PC-3 (cell line): ENCODE measurements at regions of chr11 and their contacts with region 1.

Region 1: DNA sequence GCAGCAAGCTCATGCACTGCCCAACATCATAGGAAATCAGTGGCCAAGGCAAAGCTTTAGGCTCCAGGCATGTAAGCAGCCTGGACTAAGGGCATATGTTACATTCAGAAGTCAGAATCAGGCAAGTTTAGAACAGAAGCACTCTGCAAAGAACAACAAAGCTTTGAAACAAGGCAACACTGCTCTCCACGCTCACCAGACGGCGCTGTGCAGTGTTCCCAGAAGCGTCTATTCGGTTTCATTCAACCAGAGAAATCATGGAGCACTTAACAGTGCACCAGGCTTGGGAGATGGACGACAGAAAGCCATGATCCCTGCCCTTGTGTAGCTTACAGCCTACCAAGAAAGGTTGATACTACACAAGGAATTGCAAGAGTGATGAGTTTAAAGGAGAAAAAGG is 555.8 kb downstream of the BUD13 start:
- DNase-seq: peak; percentile 57
- ATAC-seq: peak; percentile 35; the same call in 1 of the 2 replicates
- H3K4me3 ChIP-seq: no peak overlapping the region
- H3K27ac ChIP-seq: no peak overlapping the region
- H3K4me1 ChIP-seq: no peaks in the 10 kb centered on the region
- H3K27me3 ChIP-seq: no peaks in the 10 kb centered on the region
- CTCF ChIP-seq: peak; percentile 75

Region 2: DNA sequence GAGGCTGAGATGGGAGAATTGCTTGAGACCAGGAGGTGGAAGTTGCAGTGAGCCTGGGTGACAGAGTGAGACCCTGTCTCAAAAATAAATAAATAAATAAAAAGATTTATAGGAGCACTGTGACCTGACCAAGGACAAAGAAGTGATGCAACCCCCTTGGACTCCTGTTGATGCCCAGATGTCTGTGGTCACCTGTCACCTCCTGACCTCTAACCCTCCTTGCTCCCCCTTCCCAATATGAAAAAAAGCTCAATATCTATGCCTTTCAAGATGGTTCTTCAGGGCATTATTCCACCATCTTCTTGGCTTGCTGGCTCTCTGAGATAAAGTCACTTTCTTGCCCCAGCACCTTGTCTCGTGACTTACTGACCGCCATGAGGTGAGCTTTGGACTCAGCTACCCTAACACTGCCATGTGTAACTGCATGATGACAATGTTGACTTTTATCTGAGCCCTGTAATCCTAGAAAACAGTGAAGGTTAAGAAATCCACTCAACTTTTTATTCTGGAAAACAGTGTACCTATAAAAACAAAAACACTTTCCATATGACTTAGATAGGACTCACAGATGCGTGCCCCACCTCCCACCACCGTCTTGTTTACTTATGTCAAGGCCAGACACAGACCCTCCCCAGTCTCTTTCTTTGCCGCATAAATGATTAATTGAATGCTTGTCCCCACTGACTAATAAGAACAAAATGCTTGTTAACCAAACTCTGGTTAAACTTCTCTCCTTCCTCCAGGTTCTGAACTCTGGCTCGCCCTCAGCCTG is 195.3 kb after region 1 on chr11:
- CTCF ChIA-PET with region 1: no interaction called
- POLR2A ChIA-PET with region 1: no interaction called
- intact Hi-C with region 1: no loop called
- DNase-seq: peak; percentile 43
- ATAC-seq: no peak
- H3K4me3 ChIP-seq: no peak overlapping the region
- H3K27ac ChIP-seq: no peak overlapping the region
- H3K4me1 ChIP-seq: 0 out of 2 replicates have a peak, but pooled peaks cover 4% of the 10 kb centered on the region
- H3K27me3 ChIP-seq: peaks cover 28% of the 10 kb centered on the region; the same call in 1 of the 2 replicates
- CTCF ChIP-seq: no peak

Region 3: DNA sequence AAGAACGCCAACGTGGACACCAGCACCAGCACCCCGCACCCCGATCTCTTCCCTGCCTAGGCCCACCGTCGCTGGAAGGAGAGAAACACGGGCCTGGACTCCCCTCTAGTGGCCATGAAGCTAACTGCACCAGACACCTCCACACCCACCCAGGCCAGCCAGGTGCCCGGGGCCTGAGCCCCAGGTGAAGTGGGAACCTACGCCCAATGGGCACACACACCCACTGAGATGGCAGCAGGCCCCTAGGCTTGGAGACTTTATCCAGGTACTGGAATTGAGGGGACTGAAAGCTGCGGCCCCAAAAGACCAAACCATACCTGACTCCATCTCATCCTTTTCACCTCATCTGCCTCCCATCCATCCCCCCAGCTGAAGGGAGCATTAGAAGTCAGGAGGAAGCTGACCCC is 474.8 kb after region 1 on chr11:
- CTCF ChIA-PET with region 1: no interaction called
- POLR2A ChIA-PET with region 1: no interaction called
- intact Hi-C with region 1: loop called (anchors 5 kb)
- DNase-seq: peak; percentile 66
- ATAC-seq: peak; percentile 40
- H3K4me3 ChIP-seq: no peak overlapping the region
- H3K27ac ChIP-seq: no peak overlapping the region
- H3K4me1 ChIP-seq: peaks cover 36% of the 10 kb centered on the region
- H3K27me3 ChIP-seq: no peaks in the 10 kb centered on the region
- CTCF ChIP-seq: peak; percentile 93